Lower lobe of right lung (tissue), 2 donors: ENCODE measurements at regions of chr15 and their contacts with region 1.

Region 1: DNA sequence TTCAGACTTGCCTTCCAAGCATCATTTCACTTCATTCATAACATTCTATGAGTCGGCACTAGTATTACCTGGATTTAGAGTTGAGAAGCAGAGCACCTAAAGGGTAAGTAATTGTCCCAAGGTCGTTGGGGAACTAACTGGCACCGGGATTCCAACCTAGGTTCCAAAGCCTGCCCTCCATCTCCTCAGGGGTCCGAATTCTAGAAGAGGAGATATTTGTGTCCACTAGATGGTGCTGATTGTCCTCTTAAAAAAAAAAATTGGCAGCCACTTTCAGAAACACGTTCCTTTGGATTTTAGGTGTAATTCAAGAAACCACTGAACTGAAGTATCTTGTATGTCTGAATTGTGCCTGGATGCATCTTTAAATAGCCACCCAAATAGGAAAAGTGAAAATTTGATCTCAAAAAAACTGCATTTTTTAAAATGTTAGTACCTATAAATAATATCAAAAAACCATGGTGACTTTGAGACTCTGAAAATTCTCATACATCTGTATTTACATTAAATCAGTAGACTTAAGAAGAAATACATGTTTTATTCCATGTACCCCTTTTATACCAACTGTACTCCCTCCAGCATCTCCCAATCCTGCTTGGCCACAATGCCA is 3.9 kb upstream of the FSIP1 start:
- DNase-seq: no peak
- ATAC-seq: no peak
- H3K4me3 ChIP-seq: no peak overlapping the region
- H3K27ac ChIP-seq: no peak overlapping the region
- H3K4me1 ChIP-seq: peaks cover 28% of the 10 kb centered on the region
- H3K27me3 ChIP-seq: no peaks in the 10 kb centered on the region
- CTCF ChIP-seq: peak; percentile 65

Region 2: DNA sequence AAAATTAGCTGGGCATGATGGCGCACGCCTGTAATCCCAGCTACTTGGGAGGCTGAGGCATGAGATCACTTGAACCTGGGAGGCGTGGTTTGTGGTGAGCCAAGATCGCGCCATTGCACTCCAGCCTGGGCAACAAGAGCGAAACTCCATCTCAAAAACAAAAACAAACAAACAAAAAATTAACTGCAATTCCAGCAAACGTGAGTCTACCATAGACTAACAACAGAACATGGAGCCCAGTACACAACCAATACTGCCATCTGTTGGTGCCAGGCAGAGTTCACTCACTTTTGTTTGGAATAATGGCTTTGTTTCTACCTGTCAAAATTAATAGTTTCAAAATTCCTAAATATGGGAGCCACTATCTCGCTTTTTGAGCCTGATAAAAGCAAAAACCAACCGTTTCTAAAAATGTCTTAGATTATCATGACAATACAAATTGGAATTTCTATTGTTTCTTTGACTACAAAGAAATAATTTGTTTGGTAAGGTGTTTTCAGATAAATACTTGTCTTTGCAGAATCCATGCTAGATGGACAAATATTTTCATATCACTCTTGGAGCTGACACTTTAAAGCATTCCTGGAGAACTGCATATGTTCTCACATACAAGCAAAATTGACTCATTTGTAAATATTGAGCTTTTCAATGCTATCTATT is 88.5 kb after region 1 on chr15:
- intact Hi-C with region 1: loop called (anchors 5 kb)
- DNase-seq: no peak
- ATAC-seq: peak; percentile 68 to 74
- H3K4me3 ChIP-seq: no peak overlapping the region
- H3K27ac ChIP-seq: no peak overlapping the region
- H3K4me1 ChIP-seq: no peaks in the 10 kb centered on the region
- H3K27me3 ChIP-seq: no peaks in the 10 kb centered on the region
- CTCF ChIP-seq: peak; percentile 62